ENCODE measurements at regions of chr6 and their contacts with region 1.

Region 1: DNA sequence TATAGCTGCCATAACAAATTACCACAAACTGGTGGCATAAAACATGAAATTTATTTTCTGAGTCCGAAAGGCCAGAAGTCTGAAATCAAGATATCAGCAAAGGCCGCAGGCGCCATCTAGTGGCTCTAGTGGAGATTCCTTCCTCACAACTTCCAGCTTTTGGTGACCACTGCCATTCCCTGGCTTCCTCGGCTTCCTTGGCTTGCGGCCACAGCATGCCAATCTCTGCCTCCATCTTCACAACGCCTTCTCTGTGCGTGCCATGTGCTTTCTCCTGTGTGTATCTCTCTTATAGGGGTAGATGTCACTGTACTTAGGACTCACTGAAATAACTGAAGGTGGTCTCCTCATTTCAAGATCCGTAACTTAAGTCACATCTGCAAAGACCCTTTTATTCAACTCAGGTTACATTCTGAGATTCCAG is 5.4 kb upstream of the PLAGL1 start:
- DNase-seq: peak; percentile 78
- ATAC-seq: peak; percentile 43

Region 2: GRCh38 chr6:143575440-143575839 is 438.1 kb before region 1 on chr6:
- intact Hi-C with region 1: loop called (anchors 2 kb)
- DNase-seq: no peak
- ATAC-seq: peak; percentile 91